Heart right ventricle (tissue), 16 donors: ENCODE measurements at regions of chr18 and their contacts with region 1.

Region 1: DNA sequence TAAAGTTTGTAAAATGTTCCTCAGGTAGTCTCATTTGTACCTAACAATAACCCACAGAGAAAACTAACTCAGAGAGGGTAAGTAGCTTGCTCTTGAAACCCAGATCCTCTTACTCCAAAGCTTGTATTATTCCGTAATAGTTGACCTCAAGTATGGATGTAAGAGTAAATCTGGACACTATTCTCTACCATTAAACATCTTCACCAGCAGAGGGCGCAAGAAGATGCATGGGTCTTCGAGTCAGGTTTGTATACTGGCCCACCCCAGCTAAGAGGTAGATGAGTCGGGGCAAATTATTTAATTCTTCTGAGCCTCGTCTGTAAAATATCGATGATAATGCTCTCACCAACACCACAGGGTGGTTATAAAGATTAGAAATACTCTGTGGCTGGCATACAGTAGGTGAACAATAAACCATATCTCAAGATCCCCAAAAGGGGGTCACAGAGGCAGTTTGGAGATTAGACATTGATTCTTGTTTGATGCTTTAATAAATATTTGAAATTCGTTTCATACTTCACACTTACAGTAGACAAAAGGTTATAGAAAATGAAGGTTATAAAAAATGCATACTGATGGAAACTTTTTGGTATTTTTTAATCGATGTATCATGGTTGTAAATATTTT is 3.5 kb upstream of the CABLES1 start:
- DNase-seq: peak in 1 of 2 donors; percentile 81
- ATAC-seq: peak in 7 of 8 donors; percentile 48 to 76 (median 70)
- H3K4me3 ChIP-seq: no peak overlapping the region
- H3K27ac ChIP-seq: no peak overlapping the region
- H3K4me1 ChIP-seq: peaks cover 4 to 39% (median 16%) of the 10 kb centered on the region in 9 donors
- H3K27me3 ChIP-seq: peaks cover 0 to 48% (median 38%) of the 10 kb centered on the region in 7 donors
- CTCF ChIP-seq: peak; percentile 68 to 89 (median 85)

Region 2: DNA sequence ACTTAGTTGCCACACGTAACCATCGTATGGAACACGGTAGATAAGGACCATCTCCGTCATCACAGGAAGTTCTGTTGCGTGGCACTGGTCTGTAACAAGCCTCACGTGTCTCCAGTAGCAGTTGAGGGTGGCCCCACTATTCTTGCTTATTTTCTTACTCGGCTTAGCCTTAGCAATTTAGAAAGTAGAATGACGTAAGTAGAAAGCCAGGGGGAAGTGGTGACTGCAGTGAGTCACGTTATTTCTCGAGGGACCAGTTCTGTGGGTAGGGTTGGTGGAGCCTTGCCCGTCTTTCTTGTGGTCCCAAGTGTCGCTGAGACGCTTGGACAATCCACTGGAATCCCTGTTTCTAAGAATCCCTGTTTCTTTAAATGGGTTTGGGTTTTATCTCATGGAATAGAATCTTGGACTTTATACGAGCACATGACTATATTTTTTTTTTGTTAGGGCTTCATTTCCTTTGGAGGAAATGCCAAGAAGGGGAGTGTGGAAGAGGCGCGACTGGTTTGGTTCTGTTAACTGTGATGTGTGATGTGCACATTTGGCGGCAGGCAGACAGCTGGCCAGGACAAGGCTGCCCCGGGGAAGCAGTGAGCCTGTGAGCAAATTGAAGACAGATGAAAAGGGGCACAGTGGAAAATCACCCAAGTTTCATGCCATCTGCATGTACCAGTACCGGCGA is 99.7 kb after region 1 on chr18:
- intact Hi-C with region 1: loop called in 5 of 10 experiments (anchors 5 to 10 kb)
- DNase-seq: peak; percentile 43 to 77
- ATAC-seq: peak; percentile 72 to 89 (median 78)
- H3K4me3 ChIP-seq: no peak overlapping the region
- H3K27ac ChIP-seq: peak overlapping the region in 9 of 10 donors; percentile 47 to 88 (median 75)
- H3K4me1 ChIP-seq: peaks cover 9 to 61% (median 42%) of the 10 kb centered on the region in 9 donors
- H3K27me3 ChIP-seq: no peaks in the 10 kb centered on the region
- CTCF ChIP-seq: no peak

Region 3: GRCh38 chr18:23276451-23276850 is 144.6 kb after region 1 on chr18:
- intact Hi-C with region 1: loop called in 2 of 10 experiments (anchors 5 to 10 kb)
- DNase-seq: peak; percentile 37 to 47
- ATAC-seq: peak; percentile 86 to 97 (median 93)
- H3K4me3 ChIP-seq: no peak overlapping the region
- H3K27ac ChIP-seq: peak overlapping the region in 7 of 10 donors; percentile 20 to 62 (median 52)
- H3K4me1 ChIP-seq: peaks cover 0 to 14% (median 3%) of the 10 kb centered on the region in 9 donors
- H3K27me3 ChIP-seq: no peaks in the 10 kb centered on the region
- CTCF ChIP-seq: peak in 3 of 9 donors; percentile 20 to 33 (median 29)

Region 4: GRCh38 chr18:23377669-23378301 is 246.0 kb after region 1 on chr18:
- intact Hi-C with region 1: loop called in 3 of 10 experiments (anchors 5 kb)
- DNase-seq: no peak
- ATAC-seq: peak in 5 of 8 donors; percentile 48 to 66 (median 61)
- H3K4me3 ChIP-seq: no peak overlapping the region
- H3K27ac ChIP-seq: peak overlapping the region in 7 of 10 donors; percentile 19 to 56 (median 28)
- H3K4me1 ChIP-seq: peaks cover 0 to 15% (median 6%) of the 10 kb centered on the region in 9 donors
- H3K27me3 ChIP-seq: no peaks in the 10 kb centered on the region
- CTCF ChIP-seq: no peak

Region 5: DNA sequence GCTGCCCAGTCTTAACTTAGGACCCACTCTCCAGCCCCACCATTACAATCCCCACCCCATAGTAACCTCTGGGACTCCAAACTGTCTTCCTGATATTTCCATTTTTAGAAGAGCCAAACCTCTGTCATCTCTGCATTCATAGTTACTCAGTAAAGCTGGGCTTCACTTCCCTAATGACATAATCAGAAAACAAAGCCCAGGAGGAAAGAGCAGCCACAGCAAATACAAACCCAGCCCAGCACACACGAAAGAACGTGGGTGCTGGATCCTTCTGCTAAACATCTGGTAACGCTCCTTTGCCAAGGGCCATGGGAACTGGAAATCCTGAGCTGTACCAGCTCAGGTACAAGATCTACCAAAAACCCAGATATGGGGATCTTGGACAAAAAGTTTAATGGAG is 284.5 kb after region 1 on chr18:
- intact Hi-C with region 1: loop called in 5 of 10 experiments (anchors 1 to 5 kb)
- DNase-seq: no peak
- ATAC-seq: peak in 7 of 8 donors; percentile 21 to 66 (median 31)
- H3K4me3 ChIP-seq: no peak overlapping the region
- H3K27ac ChIP-seq: peak overlapping the region in 2 of 10 donors; percentile 10 to 44
- H3K4me1 ChIP-seq: peaks cover 0 to 14% (median 0%) of the 10 kb centered on the region in 9 donors
- H3K27me3 ChIP-seq: no peaks in the 10 kb centered on the region
- CTCF ChIP-seq: no peak